Right lobe of liver (tissue), 6 donors: ENCODE measurements at regions of chr6 and their contacts with region 1.

Region 1: GRCh38 chr6:159979136-159979874 is 10.4 kb downstream of the IGF2R start:
- DNase-seq: no peak
- ATAC-seq: no peak
- H3K4me3 ChIP-seq: no peak overlapping the region
- H3K27ac ChIP-seq: no peak overlapping the region
- H3K4me1 ChIP-seq: peaks cover 0 to 45% (median 21%) of the 10 kb centered on the region in 4 donors
- H3K27me3 ChIP-seq: no peaks in the 10 kb centered on the region
- CTCF ChIP-seq: no peak
- POLR2A ChIP-seq: no peak

Region 2: DNA sequence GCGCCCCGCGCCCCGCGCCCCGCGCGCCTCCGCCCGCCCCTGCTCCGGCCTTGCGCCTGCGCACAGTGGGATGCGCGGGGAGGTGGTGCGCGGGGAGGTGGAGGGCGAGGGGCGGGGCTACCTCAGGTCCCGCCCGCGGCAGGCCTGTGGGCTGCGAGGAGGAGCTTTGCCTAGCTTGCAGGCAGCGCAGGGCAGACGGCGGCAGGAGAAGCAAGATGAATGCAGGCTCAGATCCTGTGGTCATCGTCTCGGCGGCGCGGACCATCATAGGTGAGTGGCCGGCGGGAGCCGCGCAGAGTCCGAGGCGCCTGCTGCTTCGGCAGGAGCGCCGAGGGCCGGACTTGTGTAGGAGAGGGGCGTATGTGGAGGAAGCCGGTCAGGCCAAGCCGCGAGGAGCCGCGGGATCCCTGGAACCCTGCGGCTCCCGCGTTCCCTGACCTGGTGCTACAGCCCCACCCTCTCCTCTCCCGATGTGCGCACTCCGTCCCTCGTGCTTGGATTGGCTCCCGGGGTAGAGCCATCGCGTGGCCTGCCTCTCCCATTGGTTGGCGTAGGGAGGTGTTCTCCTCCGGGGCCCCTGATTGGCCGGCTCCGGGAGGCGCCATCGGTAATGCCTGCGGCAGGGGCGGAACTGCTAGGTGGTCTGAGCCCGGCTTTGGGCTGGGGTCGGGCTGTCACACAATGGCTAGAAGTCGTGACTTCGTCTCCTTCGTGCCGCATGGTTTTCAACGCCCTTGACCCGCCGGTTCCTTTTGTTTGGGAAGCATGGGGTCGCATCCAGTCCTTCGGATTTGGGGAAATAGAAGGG is 217.2 kb before region 1 on chr6 and contains the start of gene ACAT2:
- intact Hi-C with region 1: no loop called
- DNase-seq: peak; percentile 97 to 98 (median 98)
- ATAC-seq: peak; percentile 88 to 98 (median 94)
- H3K4me3 ChIP-seq: peak within 1 kb of the TSS; percentile 76 to 91 (median 87)
- H3K27ac ChIP-seq: peak within 1 kb of the TSS; percentile 95 to 96 (median 95)
- H3K4me1 ChIP-seq: peaks cover 0 to 28% (median 4%) of the 10 kb centered on the region in 4 donors
- H3K27me3 ChIP-seq: no peaks in the 10 kb centered on the region
- CTCF ChIP-seq: peak in 1 of 4 donors; percentile 14
- POLR2A ChIP-seq: peak; percentile 79
- total RNA-seq, gene ACAT2: 11.2 to 120 (median 52.2) TPM

Region 3: DNA sequence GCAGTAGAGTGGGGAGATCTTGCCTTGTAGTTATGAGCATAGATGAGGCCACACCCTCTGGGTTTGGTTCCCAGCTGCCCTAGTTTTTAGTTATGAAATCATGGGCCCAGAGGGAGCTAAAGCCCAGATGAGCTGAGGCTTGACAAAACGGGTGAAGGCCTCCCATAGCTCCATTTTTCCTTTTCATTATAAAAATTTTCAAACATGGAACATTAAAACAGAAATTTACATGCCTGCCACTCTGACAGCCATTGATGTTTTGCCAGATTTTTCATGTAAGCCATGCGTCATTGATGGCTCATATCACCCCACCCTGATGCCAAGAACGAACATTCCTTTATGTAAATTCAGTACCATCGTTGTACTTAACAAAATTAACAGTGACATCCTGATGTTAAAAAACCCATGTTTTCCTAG is 57.5 kb after region 1 on chr6:
- intact Hi-C with region 1: loop called in 1 of 2 experiments (anchors 5 kb)
- DNase-seq: no peak
- ATAC-seq: no peak
- H3K4me3 ChIP-seq: no peak overlapping the region
- H3K27ac ChIP-seq: no peak overlapping the region
- H3K4me1 ChIP-seq: peaks cover 0 to 19% (median 10%) of the 10 kb centered on the region in 4 donors
- H3K27me3 ChIP-seq: no peaks in the 10 kb centered on the region
- CTCF ChIP-seq: no peak
- POLR2A ChIP-seq: no peak

Region 4: GRCh38 chr6:160088069-160088783 is 108.9 kb after region 1 on chr6:
- intact Hi-C with region 1: no loop called
- DNase-seq: peak in 2 of 3 donors; percentile 66 to 75
- ATAC-seq: peak; percentile 44 to 67 (median 58)
- H3K4me3 ChIP-seq: no peak overlapping the region
- H3K27ac ChIP-seq: peak overlapping the region in 1 of 3 donors; percentile 36
- H3K4me1 ChIP-seq: peaks cover 0 to 48% (median 22%) of the 10 kb centered on the region in 4 donors
- H3K27me3 ChIP-seq: no peaks in the 10 kb centered on the region
- CTCF ChIP-seq: peak; percentile 65 to 81 (median 72)
- POLR2A ChIP-seq: no peak

Region 5: GRCh38 chr6:160261991-160262680 is 282.8 kb after region 1 on chr6:
- intact Hi-C with region 1: no loop called
- DNase-seq: no peak
- ATAC-seq: peak in 1 of 4 donors; percentile 28
- H3K4me3 ChIP-seq: no peak overlapping the region
- H3K27ac ChIP-seq: no peak overlapping the region
- H3K4me1 ChIP-seq: peaks cover 0 to 4% (median 0%) of the 10 kb centered on the region in 4 donors
- H3K27me3 ChIP-seq: no peaks in the 10 kb centered on the region
- CTCF ChIP-seq: no peak
- POLR2A ChIP-seq: no peak